Activated T-helper 2 cell treated with anti-CD3 and anti-CD28 coated beads, Interferon-gamma antibody, Interleukin-2, Interleukin-4, amounts not matched to agents 10 μg/mL and 5 μg/mL and 100 μg/mL, durations not matched to agents 14 hours and 24 hours and 36 hours (primary cell): ENCODE measurements at regions of chr12 and their contacts with region 1.

Region 1: DNA sequence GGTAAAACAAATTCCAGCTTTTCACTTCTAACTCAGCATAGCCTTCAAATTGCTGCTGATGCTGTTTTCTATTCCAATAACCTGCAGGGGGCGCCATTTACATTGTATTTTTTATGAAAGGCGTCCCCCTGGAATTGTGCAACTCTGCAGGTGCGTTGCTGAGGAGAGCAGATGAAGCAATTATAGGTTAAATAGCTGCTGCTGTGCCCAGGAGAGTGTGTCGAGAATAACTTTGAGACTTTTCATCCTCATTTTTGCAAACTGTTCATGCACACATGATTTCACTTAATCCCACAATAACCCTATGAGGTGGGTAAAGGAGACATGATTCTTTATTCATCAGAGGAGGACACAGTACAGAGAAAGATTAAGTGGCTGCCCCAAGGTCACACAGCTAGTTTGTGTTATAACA is 75.7 kb downstream of the MYRFL start:
- DNase-seq: peak; percentile 35
- H3K4me3 Mint-ChIP-seq: no peak overlapping the region
- H3K27ac Mint-ChIP-seq: no peak overlapping the region
- H3K4me1 Mint-ChIP-seq: peaks cover under 1% of the 10 kb centered on the region
- H3K27me3 Mint-ChIP-seq: peaks cover 5% of the 10 kb centered on the region

Region 2: DNA sequence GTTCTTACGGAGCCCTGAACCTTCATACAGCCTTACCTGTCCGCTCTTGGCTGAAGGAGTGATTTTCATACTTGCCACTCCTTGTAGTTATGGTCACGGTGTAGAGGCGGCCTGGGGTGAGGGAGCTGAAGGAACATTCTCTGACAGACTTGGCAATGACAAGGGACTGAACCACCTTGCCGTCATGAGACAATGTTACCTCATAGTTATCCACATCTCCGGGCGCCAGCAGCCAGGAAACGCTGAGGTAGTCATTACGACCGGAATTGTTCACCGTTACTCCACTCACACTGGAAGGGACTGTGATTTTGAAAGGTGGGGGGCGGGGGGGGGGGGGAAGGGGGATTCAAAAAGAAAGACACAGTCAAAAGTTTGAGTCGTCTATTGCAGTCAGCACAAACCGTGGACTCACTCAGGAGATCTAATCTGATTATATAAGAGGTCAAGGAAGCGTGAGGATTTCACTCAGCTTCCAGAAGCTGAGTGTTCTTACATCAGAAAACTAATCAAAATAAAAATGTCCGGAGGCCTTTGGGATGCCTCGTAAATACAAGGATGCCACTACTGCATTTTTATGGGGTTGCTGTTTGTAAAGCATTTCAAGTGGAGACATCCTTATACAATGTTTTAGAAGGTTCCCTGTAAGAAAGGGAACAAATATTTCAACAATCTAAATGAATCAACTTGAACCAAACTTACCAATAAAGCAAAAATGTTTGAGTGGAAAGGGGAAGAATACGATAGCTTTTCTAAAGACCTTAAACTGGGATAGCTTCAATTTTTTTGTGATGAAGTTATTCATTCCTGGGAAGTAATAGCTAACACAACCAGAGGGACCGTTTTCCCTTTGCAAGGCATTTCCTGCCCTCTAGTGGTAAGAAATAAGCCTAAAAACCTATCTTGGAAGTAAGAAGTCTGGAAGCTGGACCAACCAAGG is 675.9 kb after region 1 on chr12:
- intact Hi-C with region 1: loop called (anchors 1 kb)
- DNase-seq: no peak
- H3K4me3 Mint-ChIP-seq: no peak overlapping the region
- H3K27ac Mint-ChIP-seq: no peak overlapping the region
- H3K4me1 Mint-ChIP-seq: no peaks in the 10 kb centered on the region
- H3K27me3 Mint-ChIP-seq: peaks cover 3% of the 10 kb centered on the region

Region 3: GRCh38 chr12:70719672-70720420 is 819.1 kb after region 1 on chr12:
- intact Hi-C with region 1: loop called (anchors 5 kb)
- DNase-seq: no peak
- H3K4me3 Mint-ChIP-seq: peak overlapping the region; percentile 27
- H3K27ac Mint-ChIP-seq: no peak overlapping the region
- H3K4me1 Mint-ChIP-seq: peaks cover 3% of the 10 kb centered on the region
- H3K27me3 Mint-ChIP-seq: peaks cover 6% of the 10 kb centered on the region